Activated CD4-positive, alpha-beta memory T cell treated with anti-CD3 and anti-CD28 coated beads for 36 hours (primary cell): ENCODE measurements at regions of chr4 and their contacts with region 1.

Region 1: GRCh38 chr4:83284193-83285054 is at the start of gene COQ2:
- DNase-seq: peak; percentile 96
- H3K4me3 Mint-ChIP-seq: peak within 1 kb of the TSS; percentile 85
- H3K27ac Mint-ChIP-seq: peak within 1 kb of the TSS; percentile 89
- H3K4me1 Mint-ChIP-seq: peaks cover 39% of the 10 kb centered on the region
- H3K27me3 Mint-ChIP-seq: no peaks in the 10 kb centered on the region
- total RNA-seq, gene COQ2: 15.9 to 18.7 TPM

Region 2: DNA sequence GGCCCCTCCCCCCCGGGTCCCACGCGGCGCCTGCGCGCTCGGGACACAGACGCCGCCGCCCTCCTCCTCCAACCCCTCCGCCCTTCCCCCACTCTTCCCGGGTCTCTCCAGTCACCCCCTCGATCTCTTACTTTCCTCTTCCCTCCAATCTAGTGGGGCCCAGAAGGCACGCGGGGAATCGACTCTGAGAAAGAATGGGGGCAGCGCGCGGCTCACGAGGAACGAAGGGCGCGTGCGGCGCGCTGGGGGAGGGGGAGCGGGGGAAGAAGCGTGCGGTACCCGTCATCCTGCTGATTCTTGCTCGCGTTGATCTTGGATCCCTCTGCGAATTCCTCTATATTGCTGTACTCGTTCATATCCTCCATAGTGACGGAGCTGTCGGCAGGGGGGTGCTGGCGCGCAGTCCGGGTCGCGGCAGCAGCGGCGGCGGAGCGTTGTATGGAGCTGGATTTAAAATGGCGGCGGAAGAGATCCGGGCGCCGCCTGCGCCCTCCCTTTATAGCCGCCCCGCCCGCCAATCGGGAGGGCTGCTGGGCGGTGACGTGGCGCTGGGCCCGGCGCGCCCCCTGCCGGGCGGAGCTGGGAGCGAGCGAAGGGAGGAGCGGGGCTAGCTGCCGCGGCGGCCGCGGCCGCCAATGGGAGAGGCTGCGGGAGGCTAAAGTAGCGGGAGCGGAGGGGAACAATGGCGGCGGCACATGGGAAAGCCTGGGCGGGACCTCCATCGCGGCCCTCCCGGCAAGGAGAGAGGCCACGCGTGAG is 855.3 kb before region 1 on chr4:
- CTCF ChIA-PET with region 1: no interaction called
- POLR2A ChIA-PET with region 1: no interaction called
- intact Hi-C with region 1: loop called (anchors 1 kb)
- DNase-seq: peak; percentile 95
- H3K4me3 Mint-ChIP-seq: peak overlapping the region; percentile 99
- H3K27ac Mint-ChIP-seq: peak overlapping the region; percentile 97
- H3K4me1 Mint-ChIP-seq: peaks cover 60% of the 10 kb centered on the region
- H3K27me3 Mint-ChIP-seq: no peaks in the 10 kb centered on the region

Region 3: DNA sequence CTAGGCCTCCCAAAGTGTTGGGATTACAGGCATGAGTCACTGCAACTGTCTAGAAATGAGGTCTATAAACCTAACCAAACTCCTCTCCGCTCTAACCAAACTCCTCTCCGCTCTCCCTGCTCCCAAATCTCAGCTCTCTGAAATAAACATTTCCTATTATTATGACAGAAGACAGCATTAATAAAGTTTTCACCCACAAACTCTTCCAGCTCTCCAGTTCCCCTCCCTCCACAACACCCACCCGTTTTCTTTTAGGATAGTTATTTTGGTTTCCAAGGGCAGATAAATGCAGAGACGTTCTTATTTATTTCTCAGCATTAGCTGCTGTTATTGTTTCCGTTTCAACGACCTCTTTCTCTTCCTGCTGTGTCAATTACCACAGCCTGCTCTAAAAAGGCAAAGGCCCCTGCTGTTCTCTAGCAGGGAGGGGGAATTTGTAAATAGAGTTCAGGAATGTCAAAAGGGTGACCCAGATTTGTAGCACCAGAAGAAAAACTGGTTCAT is 472.5 kb before region 1 on chr4:
- CTCF ChIA-PET with region 1: no interaction called
- POLR2A ChIA-PET with region 1: no interaction called
- intact Hi-C with region 1: no loop called
- DNase-seq: no peak
- H3K4me3 Mint-ChIP-seq: no peak overlapping the region
- H3K27ac Mint-ChIP-seq: no peak overlapping the region
- H3K4me1 Mint-ChIP-seq: no peaks in the 10 kb centered on the region
- H3K27me3 Mint-ChIP-seq: peaks cover 2% of the 10 kb centered on the region

Region 4: GRCh38 chr4:83012687-83013419 is 271.6 kb before region 1 on chr4:
- CTCF ChIA-PET with region 1: interaction called, 4 read pairs
- POLR2A ChIA-PET with region 1: no interaction called
- intact Hi-C with region 1: loop called (anchors 1 kb)
- DNase-seq: peak; percentile 98
- H3K4me3 Mint-ChIP-seq: peak overlapping the region; percentile 92
- H3K27ac Mint-ChIP-seq: peak overlapping the region; percentile 92
- H3K4me1 Mint-ChIP-seq: peaks cover 36% of the 10 kb centered on the region
- H3K27me3 Mint-ChIP-seq: no peaks in the 10 kb centered on the region

Region 5: GRCh38 chr4:83110223-83110945 is 174.0 kb before region 1 on chr4:
- CTCF ChIA-PET with region 1: interaction called, 8 read pairs
- POLR2A ChIA-PET with region 1: interaction called, 6 read pairs
- intact Hi-C with region 1: loop called (anchors 2 kb)
- DNase-seq: peak; percentile 94
- H3K4me3 Mint-ChIP-seq: peak overlapping the region; percentile 92
- H3K27ac Mint-ChIP-seq: peak overlapping the region; percentile 98
- H3K4me1 Mint-ChIP-seq: peaks cover 46% of the 10 kb centered on the region
- H3K27me3 Mint-ChIP-seq: no peaks in the 10 kb centered on the region

Region 6: DNA sequence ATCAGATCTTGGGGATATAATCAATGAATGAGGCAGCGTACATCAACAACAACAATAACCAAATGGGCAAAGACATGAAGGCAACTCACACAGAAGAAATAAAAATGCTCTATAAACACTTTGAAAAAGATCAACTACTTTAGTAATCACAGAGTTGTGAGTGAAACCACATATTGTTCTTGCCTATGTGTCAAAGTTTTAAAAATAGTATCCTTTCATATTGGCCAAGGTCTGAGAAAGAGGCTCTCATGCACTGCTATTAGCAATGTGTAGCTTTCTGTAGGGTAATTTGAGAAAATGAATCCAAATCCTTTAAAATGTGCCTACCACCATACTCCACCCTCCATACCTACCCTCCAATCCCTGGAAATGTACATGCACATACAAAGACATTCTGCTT is 24.8 kb before region 1 on chr4:
- CTCF ChIA-PET with region 1: interaction called, 17 read pairs
- POLR2A ChIA-PET with region 1: no interaction called
- intact Hi-C with region 1: loop called (anchors 1 kb)
- DNase-seq: no peak
- H3K4me3 Mint-ChIP-seq: no peak overlapping the region
- H3K27ac Mint-ChIP-seq: no peak overlapping the region
- H3K4me1 Mint-ChIP-seq: no peaks in the 10 kb centered on the region
- H3K27me3 Mint-ChIP-seq: no peaks in the 10 kb centered on the region

Region 7: DNA sequence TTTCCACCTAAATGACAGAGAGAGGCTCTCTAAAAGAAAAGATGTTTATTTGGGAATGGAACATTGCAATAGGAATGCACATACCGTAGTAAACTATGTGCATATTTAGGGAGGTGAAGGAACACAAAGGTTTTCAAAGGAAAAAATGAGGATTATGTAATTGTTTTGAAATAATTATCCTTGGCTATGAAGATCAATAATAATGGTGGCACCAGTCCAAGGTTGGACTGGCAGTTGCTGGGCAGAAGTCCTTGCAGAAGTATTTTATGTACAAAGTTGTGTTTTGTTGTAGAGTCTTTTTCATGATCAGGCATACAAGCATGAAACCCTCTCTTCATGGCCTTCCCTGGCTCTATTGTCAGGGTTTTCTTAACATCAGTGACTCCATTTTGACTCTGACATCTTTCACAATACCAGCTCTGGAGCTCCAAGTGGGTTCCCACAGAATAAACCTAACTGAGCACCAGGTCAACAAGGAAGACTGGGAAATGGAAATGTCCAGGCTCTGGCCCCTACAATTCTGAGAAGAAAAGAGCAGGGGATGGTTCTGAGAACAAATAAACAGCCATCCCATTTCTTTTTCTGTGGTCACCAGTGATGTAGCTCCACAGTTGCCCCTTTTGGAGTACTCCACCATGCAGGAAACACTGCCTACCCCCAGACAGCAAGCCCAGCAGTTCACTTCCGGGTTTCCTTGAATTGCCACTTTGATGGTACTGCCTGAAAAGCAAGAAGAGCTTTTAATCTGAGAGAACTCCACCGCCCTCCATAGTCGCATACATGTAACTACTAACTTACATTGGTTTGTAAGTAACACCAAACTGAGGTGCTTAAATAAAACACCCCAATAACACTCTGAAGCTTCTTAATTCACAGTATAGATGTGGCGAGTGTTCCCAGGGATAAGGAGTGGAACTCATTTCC is 103.6 kb after region 1 on chr4:
- CTCF ChIA-PET with region 1: interaction called, 3 read pairs
- POLR2A ChIA-PET with region 1: no interaction called
- intact Hi-C with region 1: loop called (anchors 1 kb)
- DNase-seq: peak; percentile 24
- H3K4me3 Mint-ChIP-seq: no peak overlapping the region
- H3K27ac Mint-ChIP-seq: no peak overlapping the region
- H3K4me1 Mint-ChIP-seq: peaks cover 7% of the 10 kb centered on the region
- H3K27me3 Mint-ChIP-seq: no peaks in the 10 kb centered on the region

Region 8: GRCh38 chr4:83639849-83640493 is 355.5 kb after region 1 on chr4:
- CTCF ChIA-PET with region 1: interaction called, 3 read pairs
- POLR2A ChIA-PET with region 1: no interaction called
- intact Hi-C with region 1: loop called (anchors 5 kb)
- DNase-seq: peak; percentile 48
- H3K4me3 Mint-ChIP-seq: no peak overlapping the region
- H3K27ac Mint-ChIP-seq: no peak overlapping the region
- H3K4me1 Mint-ChIP-seq: peaks cover 3% of the 10 kb centered on the region
- H3K27me3 Mint-ChIP-seq: peaks cover 1% of the 10 kb centered on the region

Region 9: GRCh38 chr4:84110040-84110439 is 825.6 kb after region 1 on chr4:
- CTCF ChIA-PET with region 1: no interaction called
- POLR2A ChIA-PET with region 1: no interaction called
- intact Hi-C with region 1: no loop called
- DNase-seq: no peak
- H3K4me3 Mint-ChIP-seq: no peak overlapping the region
- H3K27ac Mint-ChIP-seq: no peak overlapping the region
- H3K4me1 Mint-ChIP-seq: no peaks in the 10 kb centered on the region
- H3K27me3 Mint-ChIP-seq: no peaks in the 10 kb centered on the region